Activated naive CD4-positive, alpha-beta T cell treated with anti-CD3 and anti-CD28 coated beads for 36 hours (primary cell): ENCODE measurements at regions of chrX and their contacts with region 1.

Region 1: DNA sequence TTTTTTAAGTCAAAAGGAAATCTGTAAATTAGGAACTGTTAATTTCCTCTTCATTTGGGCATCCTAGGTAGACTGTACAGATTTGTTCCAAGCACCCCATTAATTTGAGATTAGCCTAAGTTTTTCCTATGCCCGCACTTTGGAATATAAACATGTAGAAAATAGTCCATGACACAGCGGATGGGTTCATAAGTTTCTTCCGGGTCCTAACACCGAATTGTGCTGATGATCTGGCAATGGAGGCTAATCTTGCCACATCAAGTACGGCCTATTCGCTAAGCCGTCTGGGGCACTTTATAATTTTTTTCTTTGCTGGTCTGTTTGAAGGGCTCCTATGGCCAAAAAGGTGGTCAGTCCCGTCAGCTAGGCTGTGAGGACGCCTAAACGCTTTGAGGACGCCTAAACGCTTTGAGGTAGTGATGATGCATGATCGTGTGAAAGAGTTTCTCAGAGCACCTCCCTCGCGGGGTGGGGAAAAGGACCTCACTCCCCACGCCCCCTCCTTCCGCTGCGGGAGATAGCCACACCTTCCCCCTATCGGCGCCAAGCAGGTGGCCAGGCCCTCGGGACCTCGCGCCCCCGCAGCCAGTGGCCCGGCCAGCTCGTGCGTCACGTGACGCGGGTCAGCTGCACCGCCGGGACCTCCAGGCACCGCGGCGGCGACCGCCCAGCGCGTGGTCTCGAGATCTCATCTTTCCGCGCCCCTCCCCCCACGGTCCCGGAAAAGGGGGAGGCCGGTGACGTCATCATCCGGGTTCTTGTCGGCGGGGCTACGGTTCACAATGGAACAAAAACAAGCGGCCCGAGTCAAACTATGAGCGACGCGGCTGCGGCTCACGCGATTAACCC is 977 bp upstream of the USP9X start:
- DNase-seq: peak; percentile 96
- H3K4me3 Mint-ChIP-seq: peak overlapping the region; percentile 89
- H3K27ac Mint-ChIP-seq: peak overlapping the region; percentile 100
- H3K4me1 Mint-ChIP-seq: peaks cover 22% of the 10 kb centered on the region
- H3K27me3 Mint-ChIP-seq: no peaks in the 10 kb centered on the region

Region 2: DNA sequence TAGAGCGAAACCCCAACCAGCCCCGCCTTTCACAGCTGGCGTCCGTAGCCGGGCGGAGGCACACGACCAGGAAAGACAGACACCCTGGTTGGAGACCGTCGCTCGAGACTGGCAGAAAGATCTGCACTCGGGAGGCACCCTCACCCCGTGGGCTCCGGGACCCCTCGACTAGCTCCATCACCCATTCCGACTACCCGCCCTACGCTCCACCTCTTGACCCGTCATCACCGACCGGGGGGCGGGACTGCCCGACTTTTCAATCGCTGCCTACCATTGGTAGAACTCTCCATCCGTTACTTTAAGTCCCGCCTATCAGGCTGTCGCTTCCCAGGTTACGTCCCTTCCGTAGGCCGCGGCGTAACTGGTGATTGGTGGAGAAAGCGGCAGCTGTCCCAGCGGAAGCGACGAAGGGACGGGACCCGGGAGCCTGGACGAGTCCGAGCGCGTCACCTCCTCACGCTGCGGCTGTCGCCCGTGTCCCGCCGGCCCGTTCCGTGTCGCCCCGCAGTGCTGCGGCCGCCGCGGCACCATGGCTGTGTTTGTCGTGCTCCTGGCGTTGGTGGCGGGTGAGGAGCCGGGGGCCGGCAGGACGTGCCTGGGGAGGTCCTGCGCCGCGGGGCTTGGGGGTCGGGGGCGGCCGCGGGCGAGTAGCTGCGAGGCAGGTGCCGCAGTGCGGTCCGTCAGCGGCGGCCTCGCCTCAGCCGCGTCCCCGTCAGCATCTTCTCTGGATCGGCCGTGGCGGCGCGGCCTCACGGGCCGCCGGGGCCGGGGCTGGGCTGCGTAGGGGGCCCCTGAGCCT is 503.5 kb before region 1 on chrX and contains the start of gene ATP6AP2:
- CTCF ChIA-PET with region 1: no interaction called
- intact Hi-C with region 1: loop called (anchors 1 kb)
- DNase-seq: peak; percentile 95
- H3K4me3 Mint-ChIP-seq: peak within 1 kb of the TSS; percentile 83
- H3K27ac Mint-ChIP-seq: peak within 1 kb of the TSS; percentile 85
- H3K4me1 Mint-ChIP-seq: peaks cover 26% of the 10 kb centered on the region
- H3K27me3 Mint-ChIP-seq: no peaks in the 10 kb centered on the region
- total RNA-seq, gene ATP6AP2: 47.4 to 53.9 TPM

Region 3: GRCh38 chrX:40735325-40736169 is 348.7 kb before region 1 on chrX and contains the start of gene MED14:
- CTCF ChIA-PET with region 1: no interaction called
- intact Hi-C with region 1: loop called (anchors 1 kb)
- DNase-seq: peak; percentile 90
- H3K4me3 Mint-ChIP-seq: peak within 1 kb of the TSS; percentile 85
- H3K27ac Mint-ChIP-seq: peak within 1 kb of the TSS; percentile 97
- H3K4me1 Mint-ChIP-seq: peaks cover 43% of the 10 kb centered on the region
- H3K27me3 Mint-ChIP-seq: no peaks in the 10 kb centered on the region
- total RNA-seq, gene MED14: 47.3 to 50.8 TPM

Region 4: DNA sequence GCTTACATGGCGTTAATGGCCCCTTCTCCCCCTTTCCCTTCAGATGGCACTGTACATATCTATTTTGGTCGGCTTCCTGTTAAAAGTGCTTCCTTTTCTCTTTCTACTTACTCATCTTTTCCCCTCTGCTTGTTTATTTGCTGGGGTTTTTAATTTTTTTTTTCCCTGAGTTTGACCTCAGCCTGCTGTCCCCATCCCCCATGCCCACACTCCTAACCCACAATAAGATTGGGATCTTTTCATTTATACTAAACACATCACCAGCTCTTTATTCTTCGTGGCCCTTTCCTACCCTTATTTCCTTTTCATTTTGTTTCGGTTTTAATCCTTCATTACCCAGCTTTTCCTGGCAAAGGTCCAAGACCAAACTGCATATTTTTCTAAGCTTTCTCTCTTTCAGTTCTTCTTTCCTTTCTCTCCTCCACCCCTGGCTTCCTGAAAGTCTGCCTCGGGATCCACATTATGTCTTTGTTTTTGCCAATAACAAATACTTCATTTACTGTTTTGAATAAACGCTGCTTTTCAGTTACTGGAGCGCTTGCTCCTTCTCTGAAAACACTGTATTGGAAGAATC is 151.0 kb before region 1 on chrX:
- CTCF ChIA-PET with region 1: no interaction called
- intact Hi-C with region 1: loop called (anchors 2 kb)
- DNase-seq: peak; percentile 26
- H3K4me3 Mint-ChIP-seq: peak overlapping the region; percentile 48
- H3K27ac Mint-ChIP-seq: peak overlapping the region; percentile 87
- H3K4me1 Mint-ChIP-seq: peaks cover 22% of the 10 kb centered on the region
- H3K27me3 Mint-ChIP-seq: no peaks in the 10 kb centered on the region

Region 5: DNA sequence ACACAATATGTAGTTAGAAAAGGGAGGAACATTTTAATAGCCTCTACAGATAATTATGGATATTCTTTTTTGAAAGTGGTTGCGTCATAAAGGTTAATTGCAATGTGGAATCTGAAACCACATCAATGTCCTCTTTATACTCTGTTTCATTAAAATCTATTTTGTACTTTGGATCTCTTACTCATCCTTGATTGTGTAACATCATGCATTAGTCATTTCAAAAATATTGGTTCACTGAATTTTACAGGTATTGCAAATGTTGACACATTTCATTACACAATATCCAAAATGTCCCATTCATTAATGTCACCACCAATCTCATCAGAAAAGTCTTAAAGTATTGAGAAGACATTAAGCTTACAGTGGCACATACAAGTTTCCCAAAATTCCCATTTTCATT is 61.7 kb before region 1 on chrX:
- CTCF ChIA-PET with region 1: no interaction called
- intact Hi-C with region 1: loop called (anchors 2 kb)
- DNase-seq: no peak
- H3K4me3 Mint-ChIP-seq: no peak overlapping the region
- H3K27ac Mint-ChIP-seq: no peak overlapping the region
- H3K4me1 Mint-ChIP-seq: peaks cover 4% of the 10 kb centered on the region
- H3K27me3 Mint-ChIP-seq: no peaks in the 10 kb centered on the region